T-cell (primary cell): ENCODE measurements at regions of chr1 and their contacts with region 1.

Region 1: GRCh38 chr1:28933277-28933676 is 18.9 kb downstream of the EPB41 start:
- DNase-seq: peak in 1 of 35 experiments; percentile 48
- ATAC-seq: peak; percentile 55 to 86 (median 69)
- H3K4me3 ChIP-seq: no peak overlapping the region
- H3K4me3 Mint-ChIP-seq: peak overlapping the region; percentile 56 to 67 (median 67)
- H3K27ac ChIP-seq: peak overlapping the region; percentile 16
- H3K27ac Mint-ChIP-seq: peak overlapping the region; percentile 77 to 82
- H3K4me1 ChIP-seq: peaks cover 43 to 47% of the 10 kb centered on the region in 2 experiments
- H3K4me1 Mint-ChIP-seq: peaks cover 71 to 81% (median 77%) of the 10 kb centered on the region in 3 donors
- H3K27me3 ChIP-seq: no peaks in the 10 kb centered on the region
- H3K27me3 Mint-ChIP-seq: no peaks in the 10 kb centered on the region

Region 2: DNA sequence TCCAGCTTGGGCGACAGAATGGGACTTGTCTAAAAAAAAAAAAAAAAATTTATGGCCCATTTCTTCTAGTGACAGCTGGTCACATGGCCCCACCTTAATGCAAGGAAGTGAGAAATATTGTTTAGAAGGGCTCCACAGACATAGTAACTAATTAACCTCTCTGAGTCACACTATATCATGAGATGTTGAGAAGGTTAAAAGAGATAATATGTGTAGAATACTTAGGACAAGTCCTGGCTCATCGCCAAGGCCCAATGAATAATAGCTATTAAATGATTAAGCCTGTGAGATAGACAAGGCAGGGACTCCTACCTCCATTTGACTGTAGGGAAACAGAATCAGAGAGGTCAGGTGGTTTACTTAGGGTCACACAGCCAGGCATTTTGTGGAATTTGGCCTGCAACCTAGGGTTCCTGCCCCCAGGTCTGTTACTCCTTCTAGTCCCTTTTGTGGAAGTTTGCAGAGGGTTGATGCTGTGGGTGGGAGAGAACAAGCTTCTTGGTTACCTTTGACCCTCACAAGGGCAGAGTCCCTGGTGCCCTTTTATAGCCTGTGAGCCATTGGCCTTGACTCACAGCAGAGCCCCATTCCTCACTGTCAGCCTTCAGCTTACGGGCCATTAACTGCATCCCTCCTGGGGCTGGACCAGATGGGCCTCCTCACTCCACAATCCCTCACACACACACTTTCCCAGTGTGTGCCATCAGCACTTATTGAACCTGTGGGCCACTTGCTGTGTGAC is 72.8 kb before region 1 on chr1:
- CTCF ChIA-PET with region 1: no interaction called
- POLR2A ChIA-PET with region 1: no interaction called
- DNase-seq: no peak
- ATAC-seq: no peak
- H3K4me3 ChIP-seq: no peak overlapping the region
- H3K4me3 Mint-ChIP-seq: no peak overlapping the region
- H3K27ac ChIP-seq: no peak overlapping the region
- H3K27ac Mint-ChIP-seq: no peak overlapping the region
- H3K4me1 ChIP-seq: no peaks in the 10 kb centered on the region
- H3K4me1 Mint-ChIP-seq: no peaks in the 10 kb centered on the region
- H3K27me3 ChIP-seq: peaks cover 0 to 19% of the 10 kb centered on the region in 2 experiments
- H3K27me3 Mint-ChIP-seq: no peaks in the 10 kb centered on the region

Region 3: GRCh38 chr1:28956038-28956464 is 22.8 kb after region 1 on chr1:
- CTCF ChIA-PET with region 1: no interaction called
- POLR2A ChIA-PET with region 1: interaction called in 1 of 2 experiments, 11 read pairs
- DNase-seq: no peak
- ATAC-seq: no peak
- H3K4me3 ChIP-seq: no peak overlapping the region
- H3K4me3 Mint-ChIP-seq: no peak overlapping the region
- H3K27ac ChIP-seq: no peak overlapping the region
- H3K27ac Mint-ChIP-seq: no peak overlapping the region
- H3K4me1 ChIP-seq: peaks cover 8 to 33% of the 10 kb centered on the region in 2 experiments
- H3K4me1 Mint-ChIP-seq: peaks cover 71 to 76% (median 72%) of the 10 kb centered on the region in 3 donors
- H3K27me3 ChIP-seq: no peaks in the 10 kb centered on the region
- H3K27me3 Mint-ChIP-seq: no peaks in the 10 kb centered on the region

Region 4: GRCh38 chr1:29083317-29084195 is 150.3 kb after region 1 on chr1:
- CTCF ChIA-PET with region 1: no interaction called
- POLR2A ChIA-PET with region 1: no interaction called
- DNase-seq: no peak
- ATAC-seq: no peak
- H3K4me3 ChIP-seq: no peak overlapping the region
- H3K4me3 Mint-ChIP-seq: no peak overlapping the region
- H3K27ac ChIP-seq: no peak overlapping the region
- H3K27ac Mint-ChIP-seq: no peak overlapping the region
- H3K4me1 ChIP-seq: no peaks in the 10 kb centered on the region
- H3K4me1 Mint-ChIP-seq: no peaks in the 10 kb centered on the region
- H3K27me3 ChIP-seq: no peaks in the 10 kb centered on the region
- H3K27me3 Mint-ChIP-seq: no peaks in the 10 kb centered on the region